CD4-positive, alpha-beta T cell (primary cell): ENCODE measurements at regions of chr1 and their contacts with region 1.

Region 1: GRCh38 chr1:100414693-100415497 is 62.6 kb downstream of the CDC14A start:
- DNase-seq: peak in 3 of 14 experiments; percentile 54 to 81 (median 56)
- ATAC-seq: peak; percentile 82
- H3K4me3 ChIP-seq: no peak overlapping the region
- H3K4me3 Mint-ChIP-seq: peak overlapping the region; percentile 74
- H3K27ac ChIP-seq: peak overlapping the region; percentile 3 to 59
- H3K27ac Mint-ChIP-seq: peak overlapping the region; percentile 86
- H3K4me1 ChIP-seq: peaks cover 63% of the 10 kb centered on the region
- H3K4me1 Mint-ChIP-seq: peaks cover 88% of the 10 kb centered on the region
- H3K27me3 ChIP-seq: no peaks in the 10 kb centered on the region
- H3K27me3 Mint-ChIP-seq: no peaks in the 10 kb centered on the region
- CTCF ChIP-seq: no peak

Region 2: GRCh38 chr1:100430325-100430813 is 15.5 kb after region 1 on chr1:
- CTCF ChIA-PET with region 1: interaction called, 4 read pairs
- POLR2A ChIA-PET with region 1: interaction called, 67 read pairs
- intact Hi-C with region 1: loop called (anchors 2 kb)
- DNase-seq: no peak
- ATAC-seq: no peak
- H3K4me3 ChIP-seq: no peak overlapping the region
- H3K4me3 Mint-ChIP-seq: no peak overlapping the region
- H3K27ac ChIP-seq: no peak overlapping the region
- H3K27ac Mint-ChIP-seq: peak overlapping the region; percentile 68
- H3K4me1 ChIP-seq: peaks cover 41% of the 10 kb centered on the region
- H3K4me1 Mint-ChIP-seq: peaks cover 78% of the 10 kb centered on the region
- H3K27me3 ChIP-seq: no peaks in the 10 kb centered on the region
- H3K27me3 Mint-ChIP-seq: no peaks in the 10 kb centered on the region
- CTCF ChIP-seq: no peak